ENCODE measurements at regions of chr15 and their contacts with region 1.

Region 1: DNA sequence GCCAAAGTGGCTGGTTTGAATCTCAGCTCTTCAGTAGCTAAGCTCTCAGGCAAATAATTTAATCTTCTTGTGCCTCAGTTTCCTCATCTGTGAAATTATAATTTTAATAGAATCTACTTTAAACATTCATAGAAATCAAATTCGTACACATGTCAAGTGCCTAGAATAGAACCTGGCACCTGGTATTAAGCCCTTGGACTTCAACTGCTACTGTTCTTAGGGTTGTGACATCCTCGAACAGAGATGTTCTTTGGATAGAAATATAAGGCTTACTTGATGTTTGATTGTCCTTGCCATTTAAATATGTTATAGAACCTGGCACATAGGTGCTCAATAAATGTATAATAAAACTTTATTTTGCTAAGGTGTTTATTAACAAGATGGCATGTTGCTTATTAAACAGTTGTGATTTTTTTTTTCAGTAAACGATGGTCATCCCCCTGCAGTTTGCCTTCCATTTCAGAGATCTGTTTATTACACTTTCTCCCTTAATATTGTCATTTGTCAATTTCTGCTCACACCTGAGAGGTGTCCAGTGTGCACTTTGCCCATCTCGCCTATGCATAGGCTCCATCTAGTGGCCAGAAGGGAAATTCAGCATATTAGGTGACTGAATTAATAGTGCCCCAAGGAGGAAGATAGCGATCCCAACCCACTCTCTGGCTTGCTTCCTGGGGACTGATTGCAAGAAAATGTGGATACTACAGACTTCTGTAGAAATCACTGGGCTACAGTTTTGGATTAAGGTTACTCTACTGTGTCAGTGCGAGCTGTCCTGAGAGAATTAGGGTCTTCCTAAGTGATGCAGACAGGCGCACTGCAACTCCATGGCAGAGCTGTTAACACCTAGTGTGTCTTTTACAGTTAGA is 10.7 kb downstream of the IGF1R start:
- DNase-seq: peak; percentile 21
- H3K4me3 ChIP-seq: no peak overlapping the region
- H3K27ac ChIP-seq: no peak overlapping the region
- H3K4me1 ChIP-seq: peaks cover 8 to 26% (median 16%) of the 10 kb centered on the region in 4 donors
- H3K27me3 ChIP-seq: no peaks in the 10 kb centered on the region
- CTCF ChIP-seq: peak; percentile 66 to 90 (median 85)
- EP300 ChIP-seq: no peak
- POLR2A ChIP-seq: no peak

Region 2: GRCh38 chr15:98706986-98707385 is 47.9 kb after region 1 on chr15:
- in situ Hi-C with region 1: no loop called
- intact Hi-C with region 1: loop called (anchors 1 kb)
- DNase-seq: no peak
- H3K4me3 ChIP-seq: no peak overlapping the region
- H3K27ac ChIP-seq: no peak overlapping the region
- H3K4me1 ChIP-seq: peaks cover 0 to 24% (median 7%) of the 10 kb centered on the region in 4 donors
- H3K27me3 ChIP-seq: no peaks in the 10 kb centered on the region
- CTCF ChIP-seq: no peak
- EP300 ChIP-seq: no peak
- POLR2A ChIP-seq: no peak

Measured in transverse colon (tissue), 4 donors.